Activated naive CD4-positive, alpha-beta T cell treated with anti-CD3 and anti-CD28 coated beads, Interleukin-2, amount 10 ng/mL, durations not matched to agents 7 days and 5 days (primary cell): ENCODE measurements at regions of chr19 and their contacts with region 1.

Region 1: DNA sequence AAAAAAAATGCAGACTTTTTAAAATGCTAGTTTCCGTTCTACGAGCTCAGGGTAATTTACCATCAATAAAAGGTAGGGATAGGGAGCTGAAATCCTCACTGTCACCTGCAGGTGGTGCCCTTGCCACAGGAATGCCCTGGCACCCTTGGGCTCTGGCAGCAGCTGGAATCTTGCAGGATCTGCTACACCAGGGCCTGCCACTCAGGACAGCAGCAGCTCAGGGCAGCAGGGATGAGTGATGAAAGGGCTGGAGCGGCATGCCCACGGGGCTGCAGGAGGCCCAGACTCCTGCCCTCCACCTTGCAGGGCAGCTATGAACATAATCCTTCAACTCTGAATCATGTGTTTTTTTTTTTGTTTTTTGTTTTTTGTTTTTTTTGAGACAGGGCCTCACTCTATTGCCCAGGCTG is 54.0 kb downstream of the GNG7 start:
- DNase-seq: peak; percentile 85
- H3K4me3 Mint-ChIP-seq: no peak overlapping the region
- H3K27ac Mint-ChIP-seq: no peak overlapping the region
- H3K4me1 Mint-ChIP-seq: no peaks in the 10 kb centered on the region
- H3K27me3 Mint-ChIP-seq: peaks cover 6% of the 10 kb centered on the region

Region 2: DNA sequence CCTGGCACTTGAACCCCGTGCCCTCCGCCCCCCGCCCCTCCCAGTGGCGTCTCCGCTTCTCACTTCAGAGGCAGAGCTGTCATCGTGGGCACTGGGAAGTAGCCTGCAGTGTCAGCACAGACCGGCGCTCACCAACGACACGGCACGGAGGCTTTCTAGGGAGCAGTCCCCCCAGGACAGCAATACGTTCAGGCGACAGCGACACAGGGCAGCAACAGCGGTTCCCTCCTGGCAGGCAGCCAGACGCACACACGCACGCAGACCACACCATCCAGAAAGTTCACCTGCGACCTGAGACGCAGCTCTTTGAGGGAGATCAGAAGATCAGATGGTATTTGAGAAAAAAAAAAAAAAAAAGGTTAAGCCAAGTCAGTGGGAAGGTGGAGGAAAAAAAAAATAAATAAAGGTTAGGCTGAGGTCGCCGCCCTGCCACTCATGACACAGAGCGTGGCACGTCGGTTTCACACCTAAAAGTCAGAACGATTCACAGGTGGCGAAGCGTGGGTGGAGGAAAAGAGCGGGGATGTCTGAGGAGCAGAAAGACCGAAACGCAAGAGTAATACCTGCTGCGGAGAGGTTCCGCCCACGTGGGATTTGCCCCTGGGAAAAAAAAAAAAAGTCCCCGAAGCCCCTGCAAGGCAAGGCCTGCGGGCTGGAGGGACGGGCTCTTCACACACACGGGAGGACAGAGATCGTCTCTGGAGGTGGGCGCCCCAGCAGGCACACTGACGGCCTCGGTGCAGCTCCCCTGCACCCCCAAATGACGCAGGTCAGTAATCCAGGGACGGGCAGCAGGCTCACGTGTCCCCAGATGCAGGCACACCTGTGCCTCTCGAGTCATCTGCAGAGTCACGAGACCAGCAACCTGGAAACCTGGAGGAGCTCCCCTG is 40.6 kb before region 1 on chr19:
- CTCF ChIA-PET with region 1: no interaction called
- DNase-seq: peak; percentile 68
- H3K4me3 Mint-ChIP-seq: peak overlapping the region; percentile 27
- H3K27ac Mint-ChIP-seq: peak overlapping the region; percentile 6
- H3K4me1 Mint-ChIP-seq: peaks cover 38% of the 10 kb centered on the region
- H3K27me3 Mint-ChIP-seq: peaks cover 66% of the 10 kb centered on the region

Region 3: DNA sequence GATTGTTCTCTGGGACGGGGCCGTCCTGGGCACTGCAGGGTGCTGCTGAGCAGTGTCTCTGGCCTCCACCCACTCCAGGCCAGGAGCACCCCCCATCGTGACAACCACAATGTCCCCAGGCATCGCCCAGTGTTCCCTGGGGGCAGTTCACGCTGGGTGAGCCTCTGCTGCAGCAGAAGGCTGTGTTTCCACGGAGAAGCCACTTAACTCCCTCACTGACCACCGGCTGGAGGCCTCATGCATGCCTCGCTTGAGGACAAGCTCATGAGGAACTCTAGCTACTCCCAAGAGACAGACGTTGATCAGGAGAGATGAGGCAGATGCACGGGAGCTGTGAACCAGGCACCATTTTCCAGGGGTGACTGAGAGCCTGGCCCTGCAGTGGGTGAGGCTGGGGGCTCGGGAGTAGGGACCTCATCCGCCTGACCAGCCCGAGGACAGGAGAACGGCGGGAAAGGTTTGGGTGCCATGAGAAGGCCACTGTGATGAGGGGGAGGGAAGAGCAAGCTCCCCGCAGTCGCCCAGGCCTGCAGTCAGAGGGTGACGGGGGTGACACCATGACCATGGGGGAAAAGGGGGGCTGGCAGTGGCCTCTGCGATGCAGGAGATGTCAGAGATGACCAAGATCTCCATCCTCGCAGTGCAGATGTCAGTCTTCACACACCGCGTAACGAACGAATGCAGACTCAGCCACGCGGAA is 86.2 kb after region 1 on chr19:
- CTCF ChIA-PET with region 1: no interaction called
- DNase-seq: no peak
- H3K4me3 Mint-ChIP-seq: no peak overlapping the region
- H3K27ac Mint-ChIP-seq: no peak overlapping the region
- H3K4me1 Mint-ChIP-seq: peaks cover 11% of the 10 kb centered on the region
- H3K27me3 Mint-ChIP-seq: no peaks in the 10 kb centered on the region

Region 4: DNA sequence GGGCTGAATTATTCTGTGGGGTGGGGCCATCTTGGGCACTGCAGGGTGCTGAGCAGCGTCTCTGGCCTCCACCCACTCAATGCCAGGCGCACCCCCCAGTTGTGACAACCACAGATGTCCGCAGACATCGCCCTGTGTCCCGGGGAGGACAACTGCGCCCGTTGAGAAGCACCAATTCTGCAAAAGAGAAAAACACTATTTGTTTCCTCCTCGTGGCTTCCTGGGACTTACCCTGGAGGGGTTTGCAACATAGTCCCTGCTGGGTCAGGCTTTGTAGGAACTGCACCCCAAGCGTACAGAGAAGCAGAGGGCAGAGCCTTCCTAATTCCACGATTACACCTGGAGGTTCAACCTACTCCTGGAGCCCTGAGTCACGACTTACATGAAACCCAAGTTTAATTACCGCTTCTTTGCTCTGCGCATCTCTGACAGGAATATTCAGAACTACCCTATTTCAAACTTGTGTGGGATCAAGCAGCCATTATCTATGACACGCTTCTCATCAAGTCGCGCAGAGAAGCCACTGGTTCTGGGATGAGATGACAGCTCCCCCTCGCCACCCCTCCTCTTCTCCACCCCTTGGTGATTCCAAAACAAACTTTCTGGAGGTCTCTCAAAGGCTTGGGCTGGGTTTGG is 102.4 kb after region 1 on chr19:
- CTCF ChIA-PET with region 1: interaction called, 49 read pairs
- DNase-seq: no peak
- H3K4me3 Mint-ChIP-seq: no peak overlapping the region
- H3K27ac Mint-ChIP-seq: no peak overlapping the region
- H3K4me1 Mint-ChIP-seq: no peaks in the 10 kb centered on the region
- H3K27me3 Mint-ChIP-seq: peaks cover 5% of the 10 kb centered on the region

Region 5: GRCh38 chr19:2867025-2867991 is 218.8 kb after region 1 on chr19 and contains the start of gene ZNF556:
- CTCF ChIA-PET with region 1: interaction called, 12 read pairs
- DNase-seq: no peak
- H3K4me3 Mint-ChIP-seq: no peak within 1 kb of the TSS
- H3K27ac Mint-ChIP-seq: no peak within 1 kb of the TSS
- H3K4me1 Mint-ChIP-seq: no peaks in the 10 kb centered on the region
- H3K27me3 Mint-ChIP-seq: no peaks in the 10 kb centered on the region